ENCODE measurements at regions of chr10 and their contacts with region 1.

Region 1: GRCh38 chr10:5283305-5284158 is 81.2 kb upstream of the UCN3 start:
- DNase-seq: peak; percentile 64
- H3K4me3 ChIP-seq: no peak overlapping the region
- H3K27ac ChIP-seq: no peak overlapping the region
- H3K4me1 ChIP-seq: peaks cover 9% of the 10 kb centered on the region
- H3K27me3 ChIP-seq: no peaks in the 10 kb centered on the region
- CTCF ChIP-seq: peak; percentile 71 to 85

Region 2: GRCh38 chr10:5014936-5015335 is 268.6 kb before region 1 on chr10:
- CTCF ChIA-PET with region 1: no interaction called
- dilution Hi-C with region 1: no loop called
- in situ Hi-C with region 1: loop called in 1 of 2 experiments (anchors 10 kb)
- intact Hi-C with region 1: loop called (anchors 1 kb)
- DNase-seq: no peak
- H3K4me3 ChIP-seq: no peak overlapping the region
- H3K27ac ChIP-seq: no peak overlapping the region
- H3K4me1 ChIP-seq: peaks cover 12% of the 10 kb centered on the region
- H3K27me3 ChIP-seq: no peaks in the 10 kb centered on the region
- CTCF ChIP-seq: peak; percentile 16 to 43

Region 3: DNA sequence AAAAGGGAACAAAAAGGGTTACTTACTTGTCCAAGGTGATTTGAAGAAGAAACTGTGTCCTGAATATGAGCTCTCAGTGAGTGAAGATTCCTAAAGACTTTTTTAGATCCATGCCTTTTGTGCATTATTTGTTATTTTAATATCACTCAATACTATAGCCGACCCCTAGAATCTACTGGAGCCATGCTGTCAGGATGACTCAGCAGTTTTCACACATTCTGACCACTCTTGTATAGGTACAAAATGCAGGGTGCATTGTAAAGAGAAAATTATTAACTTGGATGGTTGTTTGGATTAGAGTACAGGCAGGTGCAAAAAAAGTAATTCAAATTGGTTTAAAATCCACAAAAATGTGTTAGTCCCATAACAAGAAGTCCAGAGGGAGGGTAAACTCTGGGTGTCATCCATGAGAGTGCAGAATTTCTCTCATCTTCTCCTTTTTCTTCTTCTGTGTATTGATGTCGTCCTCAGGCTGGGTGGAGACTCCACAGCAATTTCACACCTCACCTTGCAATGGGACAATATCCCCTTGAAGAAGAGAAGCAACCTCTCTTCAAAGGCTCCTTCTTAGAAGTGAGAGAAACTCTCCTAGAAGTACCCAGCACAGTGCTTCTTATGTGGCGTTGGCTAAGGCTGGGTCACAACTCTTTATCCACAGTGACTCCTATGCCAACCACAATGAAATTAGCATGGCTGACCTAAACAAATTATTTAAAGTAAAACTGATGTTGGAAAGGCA is 11.3 kb before region 1 on chr10:
- CTCF ChIA-PET with region 1: no interaction called
- dilution Hi-C with region 1: no loop called
- in situ Hi-C with region 1: no loop called
- intact Hi-C with region 1: no loop called
- DNase-seq: no peak
- H3K4me3 ChIP-seq: no peak overlapping the region
- H3K27ac ChIP-seq: no peak overlapping the region
- H3K4me1 ChIP-seq: no peaks in the 10 kb centered on the region
- H3K27me3 ChIP-seq: no peaks in the 10 kb centered on the region
- CTCF ChIP-seq: no peak

Region 4: GRCh38 chr10:5364890-5365338 is 81.4 kb after region 1 on chr10 and contains the start of gene UCN3:
- CTCF ChIA-PET with region 1: no interaction called
- dilution Hi-C with region 1: loop called (anchors 5 kb)
- in situ Hi-C with region 1: no loop called
- intact Hi-C with region 1: no loop called
- DNase-seq: no peak
- H3K4me3 ChIP-seq: no peak within 1 kb of the TSS
- H3K27ac ChIP-seq: no peak within 1 kb of the TSS
- H3K4me1 ChIP-seq: no peaks in the 10 kb centered on the region
- H3K27me3 ChIP-seq: no peaks in the 10 kb centered on the region
- CTCF ChIP-seq: no peak
- total RNA-seq, gene UCN3: not detected

Region 5: DNA sequence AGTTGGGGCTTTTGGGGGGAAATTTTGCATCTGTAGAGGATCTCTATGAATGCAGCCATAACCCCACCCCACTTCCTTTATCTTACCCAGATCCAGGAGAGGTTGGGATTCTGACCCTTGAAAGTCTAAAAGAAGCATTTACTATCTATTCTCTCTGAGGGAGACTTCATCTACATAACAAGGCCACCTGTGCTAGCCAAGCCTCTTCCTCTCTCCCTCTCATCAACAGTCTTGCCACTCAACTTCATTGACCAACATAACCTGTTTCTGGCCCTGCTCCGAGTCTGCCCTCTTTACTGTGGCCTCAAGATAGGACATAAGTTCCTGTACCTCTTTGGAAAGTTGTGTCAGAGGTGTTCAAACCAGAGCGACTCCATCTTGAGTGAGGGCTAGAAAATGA is 101.7 kb after region 1 on chr10:
- CTCF ChIA-PET with region 1: no interaction called
- dilution Hi-C with region 1: no loop called
- in situ Hi-C with region 1: no loop called
- intact Hi-C with region 1: loop called (anchors 1 kb)
- DNase-seq: no peak
- H3K4me3 ChIP-seq: no peak overlapping the region
- H3K27ac ChIP-seq: no peak overlapping the region
- H3K4me1 ChIP-seq: no peaks in the 10 kb centered on the region
- H3K27me3 ChIP-seq: no peaks in the 10 kb centered on the region
- CTCF ChIP-seq: no peak

Region 6: GRCh38 chr10:5396556-5397300 is 113.2 kb after region 1 on chr10:
- CTCF ChIA-PET with region 1: no interaction called
- dilution Hi-C with region 1: no loop called
- in situ Hi-C with region 1: no loop called
- intact Hi-C with region 1: no loop called
- DNase-seq: no peak
- H3K4me3 ChIP-seq: no peak overlapping the region
- H3K27ac ChIP-seq: no peak overlapping the region
- H3K4me1 ChIP-seq: no peaks in the 10 kb centered on the region
- H3K27me3 ChIP-seq: no peaks in the 10 kb centered on the region
- CTCF ChIP-seq: no peak